CD14-positive monocyte (primary cell): ENCODE measurements at regions of chr1 and their contacts with region 1.

Region 1: DNA sequence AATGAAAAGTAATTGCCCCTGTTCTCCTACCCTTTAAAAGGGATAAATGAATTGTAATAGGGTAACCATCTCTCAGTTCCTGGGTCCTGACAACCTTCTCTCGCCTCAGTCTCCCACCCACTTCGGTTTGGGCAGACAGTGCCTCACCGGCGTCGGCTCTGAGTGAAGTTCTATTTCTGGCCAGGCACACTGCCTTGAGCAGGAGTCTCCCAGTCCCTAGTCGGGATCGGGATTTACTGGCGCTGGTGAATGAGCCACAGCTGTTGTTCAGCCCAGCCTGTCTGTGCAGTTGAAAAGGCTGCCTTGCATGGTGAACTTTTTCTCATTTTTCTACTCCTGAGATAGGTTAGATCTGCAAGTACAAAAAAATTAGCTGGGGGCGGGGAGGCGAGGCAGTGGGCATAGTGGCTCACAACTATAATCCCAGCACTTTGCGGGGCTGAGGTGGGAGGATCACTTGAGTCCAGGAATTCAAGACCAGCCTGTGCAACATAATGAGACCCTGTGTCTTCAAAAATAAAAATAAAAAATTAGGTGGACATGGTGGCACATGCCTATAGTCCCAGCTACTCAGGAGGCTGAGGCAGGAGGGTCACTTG is 7.4 kb downstream of the PLEKHM2 start:
- DNase-seq: no peak
- H3K4me3 ChIP-seq: no peak overlapping the region
- H3K4me3 Mint-ChIP-seq: no peak overlapping the region
- H3K27ac ChIP-seq: no peak overlapping the region
- H3K27ac Mint-ChIP-seq: peak overlapping the region in 1 of 7 donors; percentile 10
- H3K4me1 ChIP-seq: peaks cover 10% of the 10 kb centered on the region in 2 donors
- H3K4me1 Mint-ChIP-seq: peaks cover 21% of the 10 kb centered on the region
- H3K27me3 ChIP-seq: no peaks in the 10 kb centered on the region
- H3K27me3 Mint-ChIP-seq: peaks cover 0 to 2% (median 1%) of the 10 kb centered on the region in 3 donors
- CTCF ChIP-seq: no peak

Region 2: DNA sequence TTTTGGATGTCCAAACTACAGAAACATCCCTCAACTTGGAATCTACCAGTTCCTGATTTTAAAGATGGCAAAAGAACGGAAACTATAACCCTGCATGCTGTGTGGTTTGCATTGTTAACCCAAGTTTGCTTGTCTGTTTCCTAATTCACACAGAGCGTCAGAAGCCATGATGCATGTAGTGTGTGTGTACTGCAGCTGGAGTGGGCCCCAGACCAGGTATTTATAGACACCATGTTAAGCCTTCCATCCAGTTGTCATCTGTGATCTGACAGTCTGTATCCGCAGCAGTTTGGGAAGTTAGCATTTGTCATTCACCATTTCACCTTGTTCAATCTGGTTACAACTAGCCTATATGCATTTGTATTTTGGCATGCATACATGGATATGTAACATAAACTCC is 35.1 kb before region 1 on chr1:
- intact Hi-C with region 1: loop called in 1 of 2 experiments (anchors 5 kb)
- DNase-seq: no peak
- H3K4me3 ChIP-seq: no peak overlapping the region
- H3K4me3 Mint-ChIP-seq: no peak overlapping the region
- H3K27ac ChIP-seq: peak overlapping the region in 1 of 2 donors; percentile 49
- H3K27ac Mint-ChIP-seq: peak overlapping the region in 3 of 7 donors; percentile 20 to 48 (median 37)
- H3K4me1 ChIP-seq: no peaks in the 10 kb centered on the region
- H3K4me1 Mint-ChIP-seq: peaks cover 3% of the 10 kb centered on the region
- H3K27me3 ChIP-seq: no peaks in the 10 kb centered on the region
- H3K27me3 Mint-ChIP-seq: no peaks in the 10 kb centered on the region
- CTCF ChIP-seq: no peak